ENCODE measurements at regions of chr1 and their contacts with region 1.

Region 1: GRCh38 chr1:248837794-248838356 is at the start of gene ZNF672:
- DNase-seq: peak; percentile 99
- total RNA-seq, gene ZNF672: 40.7 TPM

Region 2: DNA sequence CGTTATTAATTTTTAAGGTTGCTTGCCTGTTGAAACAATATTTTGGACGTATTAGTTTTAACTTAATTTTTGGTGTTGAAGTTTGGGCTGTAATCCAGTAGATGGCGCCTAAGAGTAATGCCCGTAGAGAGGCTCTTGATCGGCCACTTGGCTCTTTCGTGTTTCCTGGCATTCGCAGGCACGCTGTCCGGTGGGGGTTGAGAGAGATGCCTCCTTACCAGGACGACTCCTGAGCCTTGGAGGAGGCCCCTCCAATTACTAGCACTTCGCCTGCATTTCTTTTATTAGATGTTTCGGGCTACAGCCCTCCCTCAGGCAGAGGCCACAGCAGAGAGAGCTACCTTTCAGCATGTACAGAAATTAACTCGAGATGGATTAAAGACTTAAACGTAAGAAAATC is 594.7 kb before region 1 on chr1:
- intact Hi-C with region 1: no loop called
- DNase-seq: no peak

Region 3: DNA sequence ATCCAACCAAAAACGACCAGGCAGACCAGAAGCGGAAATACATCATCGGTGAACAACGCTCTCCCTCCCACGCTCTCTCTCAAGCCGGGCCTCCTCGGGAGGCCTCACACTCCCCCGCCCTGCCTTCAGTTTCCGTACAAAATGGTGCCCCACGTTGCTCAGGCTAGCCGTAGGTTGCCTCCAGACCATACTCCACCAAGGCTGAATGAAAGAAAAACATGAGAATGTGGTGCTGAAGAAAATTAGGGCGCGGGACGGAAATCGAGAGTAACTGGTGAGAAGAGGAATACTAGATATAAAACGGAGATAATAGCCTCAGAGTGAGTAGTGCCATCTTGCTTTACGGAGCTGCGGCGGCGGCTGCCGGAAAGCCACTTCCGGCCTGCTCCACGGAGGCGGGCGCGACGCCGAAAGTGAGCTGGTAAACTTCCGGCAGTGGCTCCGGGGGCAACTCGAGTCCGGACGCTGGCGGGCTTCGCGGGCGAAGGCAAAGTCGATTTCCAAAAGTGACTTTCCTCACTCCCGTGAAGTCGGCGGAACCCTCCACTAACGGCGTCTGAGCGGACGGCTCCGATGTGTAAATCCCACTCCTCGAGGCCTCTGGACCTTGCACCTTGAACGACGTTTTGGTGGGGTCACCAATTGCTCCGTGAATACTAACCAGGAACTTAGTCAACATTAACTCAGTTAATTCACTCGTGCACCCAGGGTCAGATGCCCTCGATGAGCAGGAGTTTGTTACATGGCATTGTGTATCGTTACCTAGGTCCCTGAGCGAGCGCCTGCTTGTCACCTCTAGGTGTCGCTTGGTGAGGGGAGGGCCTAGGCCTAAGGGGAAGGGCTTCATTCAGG is 11.7 kb before region 1 on chr1 and contains the start of gene SH3BP5L:
- intact Hi-C with region 1: loop called (anchors 1 kb)
- DNase-seq: peak; percentile 96
- total RNA-seq, gene SH3BP5L: 25.1 TPM

Region 4: DNA sequence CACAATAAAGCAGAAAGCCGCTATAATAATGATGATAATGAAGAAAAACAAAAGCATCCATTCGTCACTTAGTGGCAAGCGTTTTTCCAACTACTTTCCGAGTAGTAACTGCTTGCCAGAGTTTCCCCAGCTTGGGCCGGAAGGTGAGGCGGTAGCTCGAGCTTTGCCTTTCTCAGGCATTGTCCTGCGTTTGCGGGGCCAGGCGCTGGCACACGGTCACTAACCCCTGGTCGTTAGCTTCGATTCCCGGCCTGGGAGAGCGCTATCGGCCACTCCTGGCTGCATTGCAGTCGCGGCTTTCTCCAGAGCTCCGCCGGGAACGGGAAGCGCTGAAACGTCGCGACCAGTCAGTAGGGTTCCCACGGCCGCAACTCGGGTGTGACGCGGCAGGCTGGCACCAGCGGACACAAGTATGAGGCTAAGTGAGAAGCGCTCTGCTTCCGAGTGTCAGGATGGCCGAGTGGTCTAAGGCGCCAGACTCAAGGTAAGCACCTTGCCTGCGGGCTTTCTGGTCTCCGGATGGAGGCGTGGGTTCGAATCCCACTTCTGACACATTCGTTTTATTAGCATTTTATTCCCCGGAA is 35.6 kb after region 1 on chr1:
- intact Hi-C with region 1: loop called (anchors 1 kb)
- DNase-seq: peak; percentile 96

Region 5: DNA sequence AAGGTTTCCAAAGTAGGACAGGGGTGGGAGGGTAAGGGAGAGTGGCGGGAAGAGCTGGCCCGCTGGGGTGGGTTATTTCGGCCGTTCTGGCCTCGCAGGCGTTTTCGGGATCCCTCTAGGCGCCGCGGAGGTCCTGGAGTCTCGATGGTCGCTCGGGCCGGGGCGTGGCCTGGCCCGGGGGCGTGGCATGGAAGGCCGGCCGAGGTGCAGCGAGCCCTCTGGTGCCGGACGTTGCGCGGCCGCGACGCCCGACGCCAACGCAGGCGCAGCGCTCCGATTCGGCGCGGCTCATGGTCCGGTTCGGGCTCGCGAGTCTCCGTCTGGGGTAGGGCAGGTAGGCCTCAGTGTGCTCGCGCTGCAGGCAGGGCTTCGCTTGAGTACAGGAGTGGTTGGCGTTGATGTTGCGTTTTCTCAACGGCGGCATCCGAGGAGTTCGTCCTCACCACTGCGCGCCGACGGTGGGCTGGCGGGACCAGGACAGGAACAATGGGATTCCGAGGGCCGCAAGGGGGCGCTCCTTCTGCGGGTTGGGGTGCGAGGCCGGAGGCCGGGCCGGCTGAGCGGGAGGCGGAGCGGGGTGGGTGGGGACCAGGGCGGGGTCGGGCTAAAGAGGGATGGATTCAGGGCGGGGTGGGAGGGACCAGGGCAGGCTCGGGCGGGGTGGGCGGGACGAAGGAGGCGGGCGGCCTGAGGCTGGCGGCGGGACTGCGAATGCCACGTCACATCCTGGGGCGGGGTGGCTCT is 68.3 kb after region 1 on chr1 and contains the start of gene PGBD2:
- intact Hi-C with region 1: loop called (anchors 1 kb)
- DNase-seq: peak; percentile 98
- total RNA-seq, gene PGBD2: 2.9 TPM